Ascending aorta (tissue), 2 donors: ENCODE measurements at regions of chr3 and their contacts with region 1.

Region 1: DNA sequence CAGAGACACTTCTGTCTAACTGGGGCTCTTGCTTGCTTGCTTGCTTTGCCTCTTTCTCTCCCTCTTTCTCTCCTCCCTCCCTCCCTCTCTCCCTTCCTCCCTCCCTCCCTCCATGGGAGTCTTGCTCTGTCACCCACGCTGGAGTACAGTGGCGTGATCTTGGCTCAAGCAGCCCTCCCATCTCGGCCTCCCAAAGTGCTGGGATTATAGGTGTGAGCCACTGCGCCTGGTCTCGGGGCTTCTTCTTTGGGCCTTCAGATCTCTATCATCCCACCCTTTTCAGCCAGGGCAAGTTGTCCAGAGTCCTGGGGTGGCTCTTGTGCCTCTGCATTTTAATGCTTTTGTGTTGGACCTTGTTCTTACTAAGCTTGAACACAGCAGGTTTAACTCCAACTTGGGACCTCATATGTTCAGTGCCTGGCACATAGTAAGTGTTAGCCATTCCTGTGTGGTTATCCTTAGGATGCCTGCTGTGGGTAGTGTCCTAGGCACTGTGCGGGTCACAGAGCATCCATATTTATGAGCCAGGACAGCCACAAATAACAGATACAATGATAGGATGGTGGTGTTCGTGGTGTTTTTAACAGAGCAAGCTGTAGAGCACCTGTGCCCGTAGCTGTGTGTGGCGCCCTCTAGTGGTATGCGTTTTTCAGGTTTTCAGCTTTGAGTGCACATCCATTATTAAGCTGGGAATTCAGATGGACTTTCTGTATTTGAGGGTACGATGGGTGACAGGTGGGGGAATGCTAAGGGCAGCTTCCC is 75.1 kb downstream of the CCK start:
- DNase-seq: peak in 1 of 2 donors; percentile 72
- H3K4me3 ChIP-seq: no peak overlapping the region
- H3K27ac ChIP-seq: no peak overlapping the region
- H3K4me1 ChIP-seq: no peaks in the 10 kb centered on the region
- H3K27me3 ChIP-seq: no peaks in the 10 kb centered on the region
- CTCF ChIP-seq: peak; percentile 57 to 86 (median 79)

Region 2: GRCh38 chr3:40317061-40317855 is 1873.6 kb before region 1 on chr3:
- intact Hi-C with region 1: loop called (anchors 10 kb)
- DNase-seq: no peak
- H3K4me3 ChIP-seq: no peak overlapping the region
- H3K27ac ChIP-seq: no peak overlapping the region
- H3K4me1 ChIP-seq: no peaks in the 10 kb centered on the region
- H3K27me3 ChIP-seq: no peaks in the 10 kb centered on the region
- CTCF ChIP-seq: peak; percentile 28 to 78 (median 64)

Region 3: DNA sequence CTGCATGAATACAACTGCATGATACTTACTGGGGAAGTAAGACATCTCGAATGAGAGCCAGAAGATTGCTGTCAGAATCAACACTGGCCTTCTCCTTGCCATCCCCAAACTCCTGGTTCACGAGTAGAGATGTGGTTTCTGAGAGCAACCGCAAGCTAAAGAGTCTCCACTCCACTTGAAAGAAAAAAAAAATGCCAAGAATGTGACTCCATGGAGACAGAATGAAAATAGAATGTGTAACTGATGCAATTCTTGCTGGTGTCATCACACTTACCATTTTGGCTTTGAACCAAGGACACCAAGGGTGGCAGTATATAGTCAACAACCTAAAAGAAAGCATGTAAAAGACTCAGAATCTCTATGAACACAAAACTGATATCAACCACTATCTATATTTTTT is 509.4 kb before region 1 on chr3:
- intact Hi-C with region 1: no loop called
- DNase-seq: no peak
- H3K4me3 ChIP-seq: no peak overlapping the region
- H3K27ac ChIP-seq: no peak overlapping the region
- H3K4me1 ChIP-seq: no peaks in the 10 kb centered on the region
- H3K27me3 ChIP-seq: no peaks in the 10 kb centered on the region
- CTCF ChIP-seq: no peak

Region 4: GRCh38 chr3:41893977-41894376 is 296.9 kb before region 1 on chr3:
- intact Hi-C with region 1: loop called (anchors 1 kb)
- DNase-seq: no peak
- H3K4me3 ChIP-seq: no peak overlapping the region
- H3K27ac ChIP-seq: no peak overlapping the region
- H3K4me1 ChIP-seq: no peaks in the 10 kb centered on the region
- H3K27me3 ChIP-seq: no peaks in the 10 kb centered on the region
- CTCF ChIP-seq: peak; percentile 37 to 54 (median 43)

Region 5: DNA sequence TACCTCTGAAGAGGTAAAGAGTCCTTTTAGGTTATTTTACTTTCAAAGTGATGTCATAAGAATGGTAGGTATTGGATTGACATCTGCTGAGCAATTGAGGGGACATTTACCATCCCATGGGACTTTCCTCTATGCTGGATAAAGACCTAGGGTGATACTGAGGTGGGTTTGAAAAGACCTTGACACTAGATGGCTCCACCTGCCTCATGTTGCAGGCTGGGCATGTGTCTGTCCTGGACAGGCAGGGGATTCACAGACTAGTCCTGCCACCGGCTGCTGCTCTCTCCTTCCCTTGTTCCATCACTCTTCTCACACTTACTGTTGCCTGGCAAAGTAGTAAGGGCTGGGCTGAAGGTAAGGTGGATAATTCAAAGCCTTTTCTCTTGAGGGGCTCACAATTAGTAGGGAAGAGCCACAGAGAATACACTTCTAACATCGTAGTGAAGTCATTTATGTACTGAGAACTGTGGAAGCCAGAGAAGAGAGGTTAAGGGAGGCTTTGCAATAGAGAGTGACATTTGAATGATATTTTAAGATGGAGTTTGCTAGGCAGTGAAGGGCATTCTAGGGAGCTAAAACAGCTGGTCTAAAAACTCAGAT is 72.0 kb before region 1 on chr3:
- intact Hi-C with region 1: loop called (anchors 1 kb)
- DNase-seq: peak in 1 of 2 donors; percentile 63
- H3K4me3 ChIP-seq: no peak overlapping the region
- H3K27ac ChIP-seq: peak overlapping the region; percentile 30 to 39
- H3K4me1 ChIP-seq: peaks cover 0 to 26% of the 10 kb centered on the region in 2 donors
- H3K27me3 ChIP-seq: no peaks in the 10 kb centered on the region
- CTCF ChIP-seq: peak in 1 of 3 experiments; percentile 18